Left cardiac atrium (tissue), 4 donors: ENCODE measurements at regions of chr1 and their contacts with region 1.

Region 1: GRCh38 chr1:150925816-150926741 is at the start of gene SETDB1:
- DNase-seq: peak; percentile 96
- ATAC-seq: peak; percentile 98
- total RNA-seq, gene SETDB1: 16.3 to 19.9 TPM

Region 2: GRCh38 chr1:150876119-150876454 is 50.0 kb before region 1 on chr1:
- intact Hi-C with region 1: loop called in 1 of 2 experiments (anchors 10 kb)
- DNase-seq: no peak
- ATAC-seq: peak; percentile 67 to 83

Region 3: DNA sequence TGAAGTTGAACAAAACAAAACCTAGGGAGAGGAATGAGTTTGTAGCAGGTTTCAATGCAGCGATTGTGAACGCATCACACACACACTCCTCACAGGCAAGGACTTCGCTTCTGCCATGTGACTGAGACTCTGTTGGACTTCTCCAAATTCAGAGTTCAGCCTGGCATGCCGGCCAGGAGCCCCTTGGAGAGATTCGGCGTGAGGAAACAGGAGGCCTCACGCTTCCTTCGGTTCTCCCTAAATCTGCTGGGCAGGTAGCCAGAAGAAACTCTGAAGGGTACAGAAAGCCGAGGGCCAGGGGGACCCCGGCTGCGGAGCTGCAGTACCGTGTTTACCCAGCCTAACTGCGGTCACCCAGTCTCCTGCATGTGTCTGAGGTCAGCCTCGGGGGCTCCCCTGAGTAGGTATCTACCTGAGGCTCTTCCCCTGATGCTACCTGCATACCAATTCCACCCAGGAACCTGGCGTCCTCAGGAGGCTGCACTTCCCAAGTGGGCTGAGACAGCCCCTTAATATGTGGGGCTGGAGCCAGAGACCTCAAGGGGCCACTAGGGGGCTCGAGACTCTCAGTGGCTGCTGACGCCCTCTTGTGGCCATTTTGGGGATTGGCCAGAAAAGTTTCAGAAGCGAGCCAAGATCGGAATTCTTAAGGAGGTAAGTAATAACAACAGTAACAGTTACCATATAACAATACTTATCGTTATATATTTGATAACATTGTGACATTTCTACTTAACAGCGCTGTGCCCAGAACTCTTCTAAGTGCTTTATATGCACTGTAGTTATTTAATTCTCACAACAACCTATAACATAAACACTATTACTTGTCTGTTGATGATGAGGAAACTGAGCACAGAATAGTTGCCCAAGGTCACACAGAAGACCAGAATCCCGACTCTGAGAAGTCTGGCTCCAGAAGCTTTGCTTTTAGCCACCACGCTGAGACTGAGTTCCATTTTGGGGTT is 53.3 kb after region 1 on chr1:
- intact Hi-C with region 1: loop called in 1 of 2 experiments (anchors 10 kb)
- DNase-seq: peak; percentile 89
- ATAC-seq: peak; percentile 27 to 38